Heart left ventricle (tissue), 16 donors: ENCODE measurements at regions of chr2 and their contacts with region 1.

Region 1: GRCh38 chr2:65264821-65265670 is 37.4 kb downstream of the ACTR2 start:
- DNase-seq: peak in 1 of 5 donors; percentile 40
- ATAC-seq: peak; percentile 33 to 84 (median 81)
- H3K4me3 ChIP-seq: no peak overlapping the region
- H3K27ac ChIP-seq: no peak overlapping the region
- H3K4me1 ChIP-seq: peaks cover 0 to 12% (median 0%) of the 10 kb centered on the region in 12 donors
- H3K27me3 ChIP-seq: no peaks in the 10 kb centered on the region
- CTCF ChIP-seq: peak; percentile 58 to 81 (median 70)
- POLR2A ChIP-seq: no peak

Region 2: DNA sequence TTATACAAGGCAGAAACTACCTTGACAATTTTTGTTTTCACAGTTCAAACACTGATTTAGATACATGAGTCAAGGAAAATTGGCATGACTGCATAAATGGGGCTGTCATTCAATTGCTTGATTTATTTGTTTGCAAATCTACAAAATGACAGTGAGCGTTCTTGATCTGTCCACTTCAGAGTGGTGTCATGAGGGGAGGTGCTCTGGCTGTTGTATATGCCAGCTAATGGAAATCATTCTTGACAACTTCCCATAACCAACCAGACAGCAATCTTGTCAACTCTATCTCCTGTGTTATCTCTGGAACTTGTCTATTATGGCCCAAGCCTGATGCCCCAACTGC is 1544.0 kb before region 1 on chr2:
- intact Hi-C with region 1: no loop called
- DNase-seq: no peak
- ATAC-seq: no peak
- H3K4me3 ChIP-seq: no peak overlapping the region
- H3K27ac ChIP-seq: no peak overlapping the region
- H3K4me1 ChIP-seq: no peaks in the 10 kb centered on the region
- H3K27me3 ChIP-seq: no peaks in the 10 kb centered on the region
- CTCF ChIP-seq: no peak
- POLR2A ChIP-seq: no peak

Region 3: DNA sequence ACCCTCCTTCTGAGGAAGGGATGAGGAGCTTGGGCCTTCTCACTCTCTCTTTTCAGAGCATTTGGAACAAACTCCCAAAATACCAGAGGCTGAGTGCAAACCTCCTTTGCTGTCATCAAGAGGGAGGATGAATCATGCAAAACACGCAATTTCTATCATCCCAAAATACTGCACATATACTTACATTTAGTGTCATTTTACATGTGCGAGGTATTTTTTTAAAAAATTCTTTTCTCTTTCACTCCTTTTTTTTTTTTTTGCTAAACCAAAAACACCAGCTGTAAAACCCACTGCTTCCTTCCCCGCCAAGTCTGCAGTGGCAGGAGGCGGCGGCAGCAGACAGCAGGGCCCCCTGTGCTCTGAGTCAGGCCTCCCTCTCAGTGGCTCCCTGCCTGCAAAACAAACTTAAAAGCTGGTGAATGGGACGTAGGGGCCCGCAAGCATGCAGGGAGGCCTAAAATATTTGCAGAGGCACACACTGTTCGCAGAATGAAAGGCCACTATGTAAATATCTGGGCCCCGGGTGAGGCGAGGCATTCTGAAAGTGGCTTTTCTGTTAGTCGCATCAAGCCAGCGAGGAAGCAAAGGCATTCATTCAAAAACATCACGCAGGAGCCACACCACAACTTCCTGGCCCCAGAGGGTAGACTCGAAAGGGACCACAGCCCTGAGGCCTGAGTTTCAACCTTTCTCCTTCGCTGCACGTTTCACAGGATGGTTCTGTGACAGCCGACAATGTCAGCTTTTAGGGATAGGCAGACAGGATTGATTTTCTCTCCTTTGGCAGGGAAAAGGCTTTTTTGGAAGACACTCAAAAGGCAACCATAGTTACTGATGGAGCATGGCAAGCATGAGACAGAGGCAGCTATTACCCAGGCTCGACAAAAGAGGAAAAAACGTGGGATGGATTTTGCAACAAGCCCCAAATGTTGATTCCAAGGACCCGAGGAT is 36.0 kb after region 1 on chr2:
- intact Hi-C with region 1: loop called in 1 of 10 experiments (anchors 5 kb)
- DNase-seq: peak; percentile 37 to 79 (median 60)
- ATAC-seq: peak; percentile 50 to 82 (median 63)
- H3K4me3 ChIP-seq: peak overlapping the region in 4 of 12 donors; percentile 2 to 20 (median 9)
- H3K27ac ChIP-seq: peak overlapping the region; percentile 11 to 76 (median 54)
- H3K4me1 ChIP-seq: peaks cover 5 to 39% (median 35%) of the 10 kb centered on the region in 12 donors
- H3K27me3 ChIP-seq: no peaks in the 10 kb centered on the region
- CTCF ChIP-seq: no peak
- POLR2A ChIP-seq: no peak

Region 4: GRCh38 chr2:65545837-65546805 is 281.1 kb after region 1 on chr2:
- intact Hi-C with region 1: loop called in 3 of 10 experiments (anchors 5 kb)
- DNase-seq: peak in 3 of 5 donors; percentile 24 to 46 (median 29)
- ATAC-seq: peak; percentile 53 to 95 (median 90)
- H3K4me3 ChIP-seq: no peak overlapping the region
- H3K27ac ChIP-seq: peak overlapping the region in 11 of 12 donors; percentile 13 to 74 (median 55)
- H3K4me1 ChIP-seq: peaks cover 0 to 21% (median 12%) of the 10 kb centered on the region in 12 donors
- H3K27me3 ChIP-seq: no peaks in the 10 kb centered on the region
- CTCF ChIP-seq: no peak
- POLR2A ChIP-seq: no peak

Region 5: DNA sequence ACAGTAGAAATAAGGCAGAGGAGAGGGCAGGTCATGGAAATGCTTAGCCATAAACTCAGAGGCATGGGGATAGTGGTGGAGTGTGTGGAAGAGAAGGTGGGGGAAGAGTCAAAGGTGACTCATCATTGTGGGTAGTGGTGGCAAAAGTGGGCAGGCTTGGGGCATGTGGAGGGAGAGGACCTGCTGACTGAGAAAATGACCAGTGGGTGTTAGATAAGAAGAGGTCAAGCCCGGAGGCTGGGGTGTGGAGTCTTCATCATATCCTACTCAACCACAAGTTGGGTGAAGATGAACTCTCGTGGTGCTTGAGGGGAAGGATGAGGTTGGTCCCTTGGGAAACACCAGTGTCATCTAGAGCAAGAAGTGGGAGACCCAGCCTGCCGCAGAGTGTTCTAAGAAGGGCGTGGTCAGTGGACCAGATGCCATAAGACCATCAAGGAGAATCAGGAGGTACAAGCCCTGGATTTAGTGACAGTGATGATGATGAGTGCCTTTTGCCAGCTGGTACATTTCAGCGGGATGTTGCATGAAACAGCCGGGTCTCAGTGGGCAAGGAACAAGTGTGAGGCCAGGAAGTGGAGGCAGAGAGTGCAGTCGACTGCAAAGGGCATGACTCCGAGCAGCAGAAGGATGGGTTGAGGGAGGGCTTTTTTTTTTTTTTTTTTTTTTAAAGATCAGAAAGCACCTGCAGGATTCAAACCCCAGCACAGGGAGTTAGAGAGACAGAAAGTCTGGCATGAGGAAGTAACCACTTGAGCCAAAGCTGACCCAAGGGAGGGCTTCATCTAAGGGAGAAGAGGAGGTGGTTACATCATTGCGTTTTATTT is 289.9 kb after region 1 on chr2:
- intact Hi-C with region 1: loop called in 8 of 10 experiments (anchors 1 to 5 kb)
- DNase-seq: no peak
- ATAC-seq: peak in 1 of 4 donors; percentile 14
- H3K4me3 ChIP-seq: no peak overlapping the region
- H3K27ac ChIP-seq: no peak overlapping the region
- H3K4me1 ChIP-seq: peaks cover 0 to 8% (median 2%) of the 10 kb centered on the region in 12 donors
- H3K27me3 ChIP-seq: no peaks in the 10 kb centered on the region
- CTCF ChIP-seq: no peak
- POLR2A ChIP-seq: no peak

Region 6: DNA sequence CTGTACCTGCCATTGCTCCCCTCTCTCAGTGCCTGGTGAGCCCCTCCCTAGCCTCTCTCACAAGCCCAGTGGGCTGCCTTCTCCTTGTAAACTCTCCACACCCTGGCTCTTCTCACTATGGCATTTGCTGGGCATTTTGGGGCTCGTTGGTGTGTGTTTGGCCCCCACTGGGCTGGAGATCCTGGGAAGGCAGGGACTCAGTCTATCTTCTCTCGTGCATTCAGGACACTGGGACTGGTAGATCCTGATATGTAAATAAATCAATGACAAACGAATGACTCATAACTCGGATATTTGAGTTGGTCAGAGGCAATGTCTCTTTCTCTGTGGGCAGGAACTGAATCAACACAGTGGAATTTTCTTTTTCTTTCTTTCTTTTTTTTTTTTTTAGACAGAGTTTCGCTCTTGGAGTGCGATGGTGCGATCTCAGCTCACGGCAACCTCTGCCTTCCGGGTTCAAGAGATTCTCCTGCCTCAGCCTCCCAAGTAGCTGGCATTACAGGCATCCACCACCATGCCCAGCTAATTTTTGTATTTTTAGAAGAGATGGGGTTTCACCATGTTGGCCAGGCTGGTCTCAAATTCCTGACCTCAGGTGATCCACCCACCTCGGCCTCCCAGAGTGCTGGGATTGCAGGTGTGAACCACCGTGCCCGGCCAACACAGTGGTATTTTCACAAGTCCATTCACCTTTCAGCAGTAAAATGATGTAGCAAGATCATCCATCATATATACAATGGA is 312.0 kb after region 1 on chr2:
- intact Hi-C with region 1: loop called in 3 of 10 experiments (anchors 2 to 5 kb)
- DNase-seq: no peak
- ATAC-seq: peak in 1 of 4 donors; percentile 54
- H3K4me3 ChIP-seq: no peak overlapping the region
- H3K27ac ChIP-seq: no peak overlapping the region
- H3K4me1 ChIP-seq: peaks cover 0 to 17% (median 4%) of the 10 kb centered on the region in 12 donors
- H3K27me3 ChIP-seq: no peaks in the 10 kb centered on the region
- CTCF ChIP-seq: no peak
- POLR2A ChIP-seq: no peak